ENCODE measurements at regions of chr6 and their contacts with region 1.

Region 1: GRCh38 chr6:37018198-37019064 is 13.0 kb downstream of the FGD2 start:
- DNase-seq: peak; percentile 86 to 95 (median 92)
- H3K4me3 ChIP-seq: no peak overlapping the region
- H3K27ac ChIP-seq: no peak overlapping the region
- H3K4me1 ChIP-seq: peaks cover 3 to 40% (median 10%) of the 10 kb centered on the region in 4 experiments
- H3K27me3 ChIP-seq: no peaks in the 10 kb centered on the region

Region 2: DNA sequence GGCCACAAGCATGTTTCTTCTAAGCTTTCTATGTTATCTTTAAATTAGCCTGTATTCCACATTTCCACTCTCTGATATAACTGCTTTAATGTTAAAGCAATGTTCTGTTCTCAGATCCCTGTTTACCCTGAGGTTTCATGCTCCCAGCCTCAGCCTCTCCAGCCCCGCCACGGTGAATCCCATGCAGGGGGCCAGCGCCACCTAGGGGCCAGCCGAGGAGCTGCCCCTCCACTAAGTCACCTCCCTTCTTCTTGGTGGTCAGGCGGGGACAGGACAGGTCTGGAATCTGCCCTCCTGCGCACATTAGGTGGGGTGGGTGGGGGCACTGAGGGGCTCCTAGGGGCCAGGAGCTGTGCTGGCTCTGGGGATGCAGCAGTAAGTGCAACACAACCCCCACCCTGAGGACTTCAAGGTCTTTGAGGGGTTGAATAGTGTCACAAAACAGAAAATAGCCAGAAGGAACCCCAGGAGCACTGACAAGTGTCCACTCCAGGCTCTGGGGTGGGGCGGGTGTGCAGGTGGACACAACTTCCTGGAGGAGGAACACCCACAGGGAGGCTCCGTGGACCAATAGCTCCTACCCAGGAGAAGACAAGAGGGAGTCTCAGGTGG is 259.2 kb before region 1 on chr6:
- CTCF ChIA-PET with region 1: interaction called, 79 read pairs
- POLR2A ChIA-PET with region 1: no interaction called
- DNase-seq: peak; percentile 67 to 82 (median 77)
- H3K4me3 ChIP-seq: no peak overlapping the region
- H3K27ac ChIP-seq: no peak overlapping the region
- H3K4me1 ChIP-seq: peaks cover 0 to 24% (median under 1%) of the 10 kb centered on the region in 4 experiments
- H3K27me3 ChIP-seq: no peaks in the 10 kb centered on the region

Region 3: DNA sequence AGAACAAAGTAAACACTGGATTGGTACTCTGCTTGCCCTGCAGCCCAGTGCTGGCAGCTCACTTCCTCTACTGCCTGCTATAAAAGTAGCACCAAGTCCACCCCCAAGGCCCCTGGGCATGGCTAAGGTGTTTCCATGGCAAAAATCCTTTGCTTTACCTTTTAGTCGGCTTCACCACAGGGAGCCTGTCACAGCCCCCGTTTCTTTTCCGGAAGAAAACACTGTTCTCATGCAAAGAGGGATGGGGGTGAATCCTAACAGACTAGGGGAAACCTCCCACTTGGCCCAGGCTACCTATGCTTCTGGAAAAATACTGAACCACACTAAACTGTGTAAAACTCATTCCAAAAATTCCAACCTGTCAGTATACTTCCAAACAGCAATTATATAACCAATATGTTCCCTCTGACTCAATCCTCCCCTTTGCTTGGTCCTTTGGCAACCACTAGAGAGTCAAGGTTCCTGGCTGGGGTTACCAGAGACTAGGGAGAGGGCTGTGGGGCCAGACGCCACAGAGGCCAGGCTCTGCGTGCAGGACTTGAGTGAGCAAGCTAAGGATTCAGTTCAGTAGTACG is 159.9 kb before region 1 on chr6:
- CTCF ChIA-PET with region 1: no interaction called
- POLR2A ChIA-PET with region 1: no interaction called
- DNase-seq: no peak
- H3K4me3 ChIP-seq: no peak overlapping the region
- H3K27ac ChIP-seq: no peak overlapping the region
- H3K4me1 ChIP-seq: peaks cover 0 to 5% (median 0%) of the 10 kb centered on the region in 4 experiments
- H3K27me3 ChIP-seq: no peaks in the 10 kb centered on the region

Region 4: GRCh38 chr6:36874443-36875249 is 143.8 kb before region 1 on chr6 and contains the start of gene PPIL1:
- CTCF ChIA-PET with region 1: interaction called, 12 read pairs
- POLR2A ChIA-PET with region 1: no interaction called
- DNase-seq: peak; percentile 92 to 96 (median 94)
- H3K4me3 ChIP-seq: peak within 1 kb of the TSS; percentile 84 to 99 (median 95)
- H3K27ac ChIP-seq: peak within 1 kb of the TSS; percentile 97 to 99
- H3K4me1 ChIP-seq: peaks cover 10 to 26% (median 14%) of the 10 kb centered on the region in 4 experiments
- H3K27me3 ChIP-seq: no peaks in the 10 kb centered on the region

Region 5: DNA sequence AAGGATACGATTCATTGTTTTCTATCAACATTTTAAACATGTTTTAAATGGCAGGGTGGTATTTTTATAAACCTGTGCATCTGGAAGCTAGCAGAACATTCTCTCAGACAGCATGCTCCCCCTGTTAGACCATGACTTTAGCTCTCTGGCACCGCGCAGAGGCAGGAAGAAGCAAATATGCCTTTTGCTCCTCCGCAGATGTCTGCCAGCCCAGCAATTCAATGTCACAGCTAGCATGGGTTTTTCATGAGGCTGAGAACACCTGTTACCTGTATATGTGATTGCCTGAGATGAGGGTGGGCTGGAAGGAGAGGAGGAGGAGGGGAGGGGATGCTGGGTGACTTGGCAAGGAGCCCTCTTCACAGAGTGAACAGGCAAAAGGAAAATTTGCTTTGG is 39.1 kb before region 1 on chr6:
- CTCF ChIA-PET with region 1: interaction called, 45 read pairs
- POLR2A ChIA-PET with region 1: interaction called, 3 read pairs
- DNase-seq: peak; percentile 42 to 77 (median 72)
- H3K4me3 ChIP-seq: no peak overlapping the region
- H3K27ac ChIP-seq: no peak overlapping the region
- H3K4me1 ChIP-seq: peaks cover 5 to 17% (median 11%) of the 10 kb centered on the region in 4 experiments
- H3K27me3 ChIP-seq: no peaks in the 10 kb centered on the region

Region 6: DNA sequence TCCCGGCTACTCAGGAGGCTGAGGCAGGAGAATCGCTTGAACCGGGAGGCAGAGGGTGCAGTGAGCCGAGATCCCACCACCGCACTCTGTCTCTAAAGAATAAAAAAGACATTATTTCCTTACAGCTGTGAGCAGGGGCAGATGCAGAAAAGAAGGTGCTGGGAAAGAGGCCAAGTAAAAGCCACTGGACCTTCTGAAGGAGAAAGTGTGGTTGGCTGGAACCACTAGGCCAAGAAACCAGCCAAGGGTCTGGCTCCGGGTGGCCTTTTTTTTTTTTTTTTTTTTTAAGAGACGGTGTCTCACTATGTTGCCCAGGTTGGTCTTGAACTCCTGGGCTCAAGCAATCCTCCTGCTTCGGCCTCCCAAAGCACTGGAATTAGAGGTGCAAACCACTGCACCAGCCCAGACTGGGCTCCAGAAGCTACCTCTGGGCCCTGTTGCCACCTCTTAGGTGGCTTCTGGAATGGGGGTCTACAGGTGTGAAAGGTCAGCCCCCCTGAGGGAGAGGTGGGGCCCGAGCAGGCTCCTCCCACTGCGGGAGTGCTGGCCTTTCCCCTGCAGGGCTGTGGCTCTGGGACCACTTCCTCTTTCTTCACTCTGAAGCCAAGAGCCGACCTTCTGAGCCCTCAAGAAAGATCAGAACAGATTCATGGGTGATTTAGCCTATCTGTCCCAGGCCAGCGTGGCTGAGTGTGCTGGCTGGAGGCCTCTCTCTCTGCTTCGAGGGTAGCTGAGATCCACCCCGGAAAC is 13.2 kb before region 1 on chr6 and contains the start of gene FGD2:
- CTCF ChIA-PET with region 1: interaction called, 57 read pairs
- POLR2A ChIA-PET with region 1: no interaction called
- DNase-seq: peak; percentile 52 to 85 (median 85)
- H3K4me3 ChIP-seq: peak within 1 kb of the TSS in 4 of 7 experiments; percentile 11 to 65 (median 26)
- H3K27ac ChIP-seq: peak within 1 kb of the TSS in 1 of 2 experiments; percentile 10
- H3K4me1 ChIP-seq: peaks cover 6 to 53% (median 27%) of the 10 kb centered on the region in 4 experiments
- H3K27me3 ChIP-seq: no peaks in the 10 kb centered on the region

Region 7: DNA sequence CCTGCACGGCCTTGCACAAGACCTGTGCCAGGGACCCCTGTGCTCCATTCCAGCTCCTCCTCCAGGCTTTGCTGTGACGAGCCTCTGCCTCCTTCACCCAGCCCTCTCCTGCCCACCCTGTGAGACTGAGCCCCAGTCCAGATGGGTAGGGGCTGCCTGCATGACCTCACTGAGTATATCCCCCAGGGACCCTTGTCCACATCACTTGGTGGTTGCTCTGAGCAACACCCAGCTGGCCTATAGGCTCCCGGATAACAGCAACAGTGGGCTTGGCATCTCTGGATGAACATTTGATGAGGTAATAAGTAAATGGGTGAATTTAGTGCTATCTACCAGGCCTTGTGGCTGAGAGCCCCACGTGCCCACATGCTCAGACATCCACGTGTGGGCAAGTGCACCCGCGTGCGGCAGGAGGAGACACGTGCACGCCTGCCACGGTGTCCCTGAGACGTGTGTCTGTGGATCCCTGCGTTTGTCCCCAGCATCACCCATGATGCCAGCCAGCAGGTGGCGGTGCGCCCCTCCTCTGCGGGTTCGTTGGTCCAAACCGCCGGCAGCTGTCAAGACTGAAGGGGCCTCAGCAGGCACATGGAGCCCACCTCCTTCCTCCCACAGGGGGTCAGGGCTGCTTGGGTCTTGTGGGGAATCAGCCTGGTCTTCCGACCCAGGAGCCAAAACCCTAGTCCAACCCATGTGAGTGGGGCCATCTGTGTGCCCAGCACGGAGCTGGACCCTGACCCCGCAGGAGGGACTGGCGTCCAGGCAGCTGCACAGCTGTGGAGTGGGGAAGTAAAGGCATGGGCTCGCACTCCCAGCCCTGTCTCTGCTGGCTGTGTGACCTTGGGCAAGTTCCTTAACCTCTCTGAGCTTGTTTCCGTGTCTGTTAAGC is 33.0 kb after region 1 on chr6:
- CTCF ChIA-PET with region 1: interaction called, 474 read pairs
- POLR2A ChIA-PET with region 1: interaction called, 3 read pairs
- DNase-seq: peak; percentile 89 to 94 (median 94)
- H3K4me3 ChIP-seq: peak overlapping the region in 3 of 7 experiments; percentile 7 to 58 (median 29)
- H3K27ac ChIP-seq: peak overlapping the region in 1 of 2 experiments; percentile 86
- H3K4me1 ChIP-seq: peaks cover 14 to 77% (median 53%) of the 10 kb centered on the region in 4 experiments
- H3K27me3 ChIP-seq: no peaks in the 10 kb centered on the region

Region 8: DNA sequence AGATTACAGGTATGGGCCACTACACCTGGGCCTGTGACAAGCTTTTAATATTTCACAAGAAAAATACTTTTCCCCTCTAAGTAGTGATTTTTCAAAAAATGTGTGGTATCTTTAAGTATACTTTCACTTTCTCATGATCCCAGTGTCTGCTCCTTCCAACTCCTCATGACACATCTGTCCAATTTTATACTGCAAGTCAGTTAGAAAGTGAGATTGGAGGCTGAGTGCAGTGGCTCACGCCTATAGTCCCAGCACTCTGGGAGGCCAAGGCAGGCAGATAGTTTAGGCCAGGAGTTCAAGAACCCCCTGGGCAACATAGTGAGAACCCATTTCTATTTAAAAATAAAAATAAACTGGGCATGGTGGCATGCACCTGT is 171.7 kb after region 1 on chr6:
- CTCF ChIA-PET with region 1: interaction called, 618 read pairs
- POLR2A ChIA-PET with region 1: no interaction called
- DNase-seq: peak in 2 of 3 donors; percentile 73 to 81
- H3K4me3 ChIP-seq: peak overlapping the region in 1 of 7 experiments; percentile 15
- H3K27ac ChIP-seq: peak overlapping the region; percentile 25 to 85
- H3K4me1 ChIP-seq: peaks cover 16 to 85% (median 60%) of the 10 kb centered on the region in 4 experiments
- H3K27me3 ChIP-seq: no peaks in the 10 kb centered on the region